CD4-positive, alpha-beta memory T cell (primary cell): ENCODE measurements at regions of chr1 and their contacts with region 1.

Region 1: DNA sequence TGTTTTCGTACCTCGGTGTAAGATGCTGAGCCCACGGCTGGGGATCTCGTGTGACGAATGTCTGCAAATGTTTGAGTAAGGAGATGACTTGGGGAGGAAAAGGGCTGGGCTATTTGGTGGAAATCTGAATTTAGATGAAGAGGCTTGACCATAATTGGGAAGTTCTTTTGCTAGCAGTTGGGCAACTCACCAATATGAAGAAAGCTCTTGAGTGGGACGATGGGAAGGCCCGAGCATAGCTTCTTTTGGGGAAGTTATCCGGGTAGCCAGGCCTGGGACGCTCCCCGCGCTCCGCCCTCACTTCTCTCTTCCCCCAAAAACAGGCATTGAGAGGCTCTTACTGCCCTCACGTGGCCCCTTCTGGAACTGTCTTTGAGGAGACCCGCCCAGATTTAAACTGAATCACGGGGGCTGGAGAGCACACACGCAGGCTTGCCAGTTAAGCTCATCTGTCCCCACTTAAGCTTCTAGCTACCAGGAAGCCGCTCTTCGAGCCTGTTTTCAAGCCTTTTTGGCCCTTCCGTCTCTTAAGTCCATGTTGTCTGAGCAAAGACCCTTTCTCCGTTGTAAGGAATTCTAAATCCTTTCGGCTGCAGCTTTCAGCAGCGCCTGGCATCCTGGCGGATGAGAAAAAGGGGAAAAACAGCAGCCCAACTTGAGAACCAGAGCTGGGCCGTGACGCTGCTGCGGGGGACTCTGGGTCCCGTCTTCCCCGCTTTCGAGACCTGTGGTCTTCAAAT is 93.1 kb downstream of the NID1 start:
- DNase-seq: peak; percentile 78 to 84 (median 82)
- H3K4me3 ChIP-seq: peak overlapping the region in 1 of 2 donors; percentile 28
- H3K4me3 Mint-ChIP-seq: peak overlapping the region; percentile 16 to 79 (median 56)
- H3K27ac ChIP-seq: no peak overlapping the region
- H3K27ac Mint-ChIP-seq: peak overlapping the region; percentile 12 to 79 (median 74)
- H3K4me1 ChIP-seq: peaks cover 11% of the 10 kb centered on the region
- H3K4me1 Mint-ChIP-seq: peaks cover 6 to 17% (median 15%) of the 10 kb centered on the region in 4 donors
- H3K27me3 ChIP-seq: no peaks in the 10 kb centered on the region
- H3K27me3 Mint-ChIP-seq: no peaks in the 10 kb centered on the region

Region 2: GRCh38 chr1:235513495-235514366 is 458.0 kb before region 1 on chr1:
- CTCF ChIA-PET with region 1: interaction called, 23 read pairs
- POLR2A ChIA-PET with region 1: interaction called, 3 read pairs
- intact Hi-C with region 1: loop called (anchors 1 kb)
- DNase-seq: peak; percentile 47 to 68 (median 63)
- H3K4me3 ChIP-seq: no peak overlapping the region
- H3K4me3 Mint-ChIP-seq: no peak overlapping the region
- H3K27ac ChIP-seq: no peak overlapping the region
- H3K27ac Mint-ChIP-seq: peak overlapping the region in 1 of 7 donors; percentile 30
- H3K4me1 ChIP-seq: no peaks in the 10 kb centered on the region
- H3K4me1 Mint-ChIP-seq: peaks cover 0 to 1% (median 0%) of the 10 kb centered on the region in 4 donors
- H3K27me3 ChIP-seq: no peaks in the 10 kb centered on the region
- H3K27me3 Mint-ChIP-seq: peaks cover 4 to 6% of the 10 kb centered on the region in 2 donors

Region 3: GRCh38 chr1:235802947-235803346 is 168.8 kb before region 1 on chr1:
- CTCF ChIA-PET with region 1: interaction called, 4 read pairs
- POLR2A ChIA-PET with region 1: no interaction called
- intact Hi-C with region 1: loop called (anchors 5 kb)
- DNase-seq: no peak
- H3K4me3 ChIP-seq: no peak overlapping the region
- H3K4me3 Mint-ChIP-seq: no peak overlapping the region
- H3K27ac ChIP-seq: no peak overlapping the region
- H3K27ac Mint-ChIP-seq: peak overlapping the region in 2 of 7 donors; percentile 68 to 70
- H3K4me1 ChIP-seq: no peaks in the 10 kb centered on the region
- H3K4me1 Mint-ChIP-seq: peaks cover 0 to 2% (median 0%) of the 10 kb centered on the region in 4 donors
- H3K27me3 ChIP-seq: no peaks in the 10 kb centered on the region
- H3K27me3 Mint-ChIP-seq: no peaks in the 10 kb centered on the region

Region 4: GRCh38 chr1:235866913-235867845 is 104.6 kb before region 1 on chr1:
- CTCF ChIA-PET with region 1: interaction called, 105 read pairs
- POLR2A ChIA-PET with region 1: interaction called, 40 read pairs
- intact Hi-C with region 1: loop called (anchors 1 kb)
- DNase-seq: peak; percentile 95 to 100 (median 99)
- H3K4me3 ChIP-seq: peak overlapping the region; percentile 72 to 86
- H3K4me3 Mint-ChIP-seq: peak overlapping the region; percentile 77 to 99 (median 96)
- H3K27ac ChIP-seq: peak overlapping the region; percentile 100
- H3K27ac Mint-ChIP-seq: peak overlapping the region; percentile 98 to 100 (median 99)
- H3K4me1 ChIP-seq: peaks cover 31% of the 10 kb centered on the region
- H3K4me1 Mint-ChIP-seq: peaks cover 26 to 60% (median 40%) of the 10 kb centered on the region in 4 donors
- H3K27me3 ChIP-seq: no peaks in the 10 kb centered on the region
- H3K27me3 Mint-ChIP-seq: no peaks in the 10 kb centered on the region

Region 5: DNA sequence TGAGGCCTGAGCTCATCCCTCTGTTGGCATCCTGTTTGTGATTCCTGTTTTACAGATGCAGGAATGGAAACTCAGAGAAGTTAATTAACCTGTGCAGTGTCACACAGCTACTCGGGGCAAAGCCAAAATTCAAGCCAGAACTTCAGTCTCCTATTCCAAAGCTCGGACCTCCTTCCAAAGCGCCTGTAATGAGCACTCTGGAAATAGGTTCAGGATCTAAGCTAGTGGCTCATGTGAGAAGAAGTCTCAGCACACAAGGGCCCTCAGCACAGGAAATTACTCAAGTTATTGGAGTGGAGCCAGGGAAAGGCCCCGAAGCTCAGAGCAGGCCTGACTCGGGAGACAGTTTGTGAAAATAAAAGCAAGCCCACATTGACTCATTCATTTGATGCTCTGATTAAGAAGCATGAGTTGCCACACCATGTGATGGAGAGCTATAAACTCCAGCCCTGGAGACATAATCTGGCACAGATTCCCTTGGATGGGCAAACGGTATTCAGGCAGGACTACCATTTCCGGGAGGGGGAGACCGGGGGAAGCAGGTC is 54.4 kb before region 1 on chr1:
- CTCF ChIA-PET with region 1: interaction called, 15 read pairs
- POLR2A ChIA-PET with region 1: no interaction called
- intact Hi-C with region 1: no loop called
- DNase-seq: peak; percentile 51 to 84 (median 65)
- H3K4me3 ChIP-seq: no peak overlapping the region
- H3K4me3 Mint-ChIP-seq: peak overlapping the region in 4 of 8 donors; percentile 7 to 72 (median 28)
- H3K27ac ChIP-seq: peak overlapping the region; percentile 3
- H3K27ac Mint-ChIP-seq: peak overlapping the region; percentile 66 to 95 (median 90)
- H3K4me1 ChIP-seq: peaks cover 9% of the 10 kb centered on the region
- H3K4me1 Mint-ChIP-seq: peaks cover 17 to 34% (median 19%) of the 10 kb centered on the region in 4 donors
- H3K27me3 ChIP-seq: no peaks in the 10 kb centered on the region
- H3K27me3 Mint-ChIP-seq: no peaks in the 10 kb centered on the region

Region 6: GRCh38 chr1:235984041-235984825 is 12.5 kb after region 1 on chr1:
- CTCF ChIA-PET with region 1: interaction called, 39 read pairs
- POLR2A ChIA-PET with region 1: interaction called, 3 read pairs
- intact Hi-C with region 1: no loop called
- DNase-seq: no peak
- H3K4me3 ChIP-seq: no peak overlapping the region
- H3K4me3 Mint-ChIP-seq: no peak overlapping the region
- H3K27ac ChIP-seq: no peak overlapping the region
- H3K27ac Mint-ChIP-seq: no peak overlapping the region
- H3K4me1 ChIP-seq: no peaks in the 10 kb centered on the region
- H3K4me1 Mint-ChIP-seq: no peaks in the 10 kb centered on the region
- H3K27me3 ChIP-seq: no peaks in the 10 kb centered on the region
- H3K27me3 Mint-ChIP-seq: no peaks in the 10 kb centered on the region

Region 7: DNA sequence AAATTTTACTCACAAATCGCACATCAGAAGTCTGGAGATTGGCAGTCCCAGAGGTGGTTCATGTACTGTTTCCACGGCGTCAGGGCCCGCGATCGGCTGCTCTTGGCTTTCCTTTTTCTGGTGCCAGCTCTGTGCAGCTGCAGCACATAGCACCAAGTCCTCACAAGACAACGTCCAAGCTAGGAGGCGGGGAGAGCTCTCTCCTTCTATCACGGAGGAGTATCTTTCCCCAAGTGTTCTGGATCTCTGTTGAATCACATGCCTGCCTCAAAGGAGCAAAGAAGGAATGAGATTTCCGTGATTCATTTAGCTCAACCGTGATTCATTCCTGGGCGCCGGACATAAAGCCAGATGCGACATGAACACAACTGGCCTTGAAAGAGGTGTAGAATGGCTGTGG is 1007.0 kb after region 1 on chr1:
- CTCF ChIA-PET with region 1: no interaction called
- POLR2A ChIA-PET with region 1: no interaction called
- intact Hi-C with region 1: no loop called
- DNase-seq: no peak
- H3K4me3 ChIP-seq: no peak overlapping the region
- H3K4me3 Mint-ChIP-seq: no peak overlapping the region
- H3K27ac ChIP-seq: no peak overlapping the region
- H3K27ac Mint-ChIP-seq: no peak overlapping the region
- H3K4me1 ChIP-seq: no peaks in the 10 kb centered on the region
- H3K4me1 Mint-ChIP-seq: no peaks in the 10 kb centered on the region
- H3K27me3 ChIP-seq: no peaks in the 10 kb centered on the region
- H3K27me3 Mint-ChIP-seq: peaks cover 0 to 3% of the 10 kb centered on the region in 2 donors